ENCODE measurements at regions of chr5 and their contacts with region 1.

Region 1: GRCh38 chr5:151663617-151664293 is 23.0 kb downstream of the SPARC start:
- DNase-seq: peak in 2 of 4 donors; percentile 12 to 47
- ATAC-seq: no peak
- H3K4me3 ChIP-seq: no peak overlapping the region
- H3K27ac ChIP-seq: peak overlapping the region in 1 of 4 donors; percentile 15
- H3K4me1 ChIP-seq: peaks cover 15% of the 10 kb centered on the region
- H3K27me3 ChIP-seq: no peaks in the 10 kb centered on the region
- CTCF ChIP-seq: no peak
- POLR2A ChIP-seq: no peak

Region 2: DNA sequence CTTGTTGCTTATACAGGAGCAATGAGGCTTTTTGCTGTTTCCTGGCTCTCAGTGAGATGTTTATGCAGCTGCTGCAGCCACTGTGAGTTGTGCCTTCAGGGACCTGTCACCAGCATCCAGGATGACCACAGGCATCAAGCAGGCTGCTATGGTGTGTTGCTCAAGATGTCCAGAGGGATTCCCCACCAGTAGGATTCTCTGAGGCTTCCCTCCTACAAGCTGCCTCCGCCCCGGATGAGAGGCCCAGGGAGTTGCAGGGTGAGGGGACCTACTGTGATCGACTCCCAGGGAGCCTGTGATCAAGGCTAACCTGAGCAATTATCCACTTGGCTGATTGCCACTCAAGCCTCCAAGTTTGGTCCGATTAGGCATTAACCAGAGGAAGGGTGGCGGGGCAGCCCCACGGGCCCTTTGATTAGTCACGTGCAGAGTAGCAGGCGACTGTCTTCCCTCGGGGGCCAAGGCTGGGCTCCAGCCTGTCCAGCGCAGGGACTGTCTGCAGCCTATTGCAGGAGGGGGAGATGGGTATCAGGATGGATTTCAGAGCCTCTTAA is 70.8 kb before region 1 on chr5:
- intact Hi-C with region 1: no loop called
- DNase-seq: peak; percentile 12 to 44 (median 19)
- ATAC-seq: peak; percentile 35
- H3K4me3 ChIP-seq: no peak overlapping the region
- H3K27ac ChIP-seq: no peak overlapping the region
- H3K4me1 ChIP-seq: peaks cover 8% of the 10 kb centered on the region
- H3K27me3 ChIP-seq: no peaks in the 10 kb centered on the region
- CTCF ChIP-seq: no peak
- POLR2A ChIP-seq: no peak

Region 3: DNA sequence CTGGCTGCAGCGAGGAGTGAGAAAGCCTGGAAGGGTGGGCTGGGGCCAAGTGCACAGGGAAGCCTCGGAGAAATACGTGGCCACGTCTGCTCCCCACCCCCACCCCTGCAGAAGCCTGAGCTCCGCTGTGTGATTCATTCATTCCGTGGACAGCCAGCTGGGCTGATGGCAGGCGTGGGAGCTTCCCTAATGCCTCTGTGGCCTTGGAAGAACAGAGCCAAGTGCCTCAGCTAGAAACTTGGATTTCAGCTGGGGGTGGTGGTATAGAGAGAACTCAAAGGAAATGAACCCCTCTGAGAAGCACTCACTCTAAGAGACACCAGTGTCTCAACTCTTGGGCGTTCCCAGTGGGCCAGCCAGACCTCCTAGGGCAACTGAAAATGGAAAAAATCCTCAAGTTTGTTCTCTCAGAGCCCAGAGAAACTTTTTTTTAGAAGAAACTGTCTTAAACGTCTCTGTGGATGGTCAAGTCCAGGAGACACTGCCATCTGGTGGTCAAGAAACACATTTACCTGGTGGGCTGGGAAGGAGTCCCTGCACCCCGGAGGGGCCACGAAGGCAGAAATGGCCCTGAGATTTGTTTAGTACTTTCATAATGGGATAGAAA is 76.7 kb after region 1 on chr5:
- intact Hi-C with region 1: loop called (anchors 10 kb)
- DNase-seq: peak; percentile 40 to 54 (median 49)
- ATAC-seq: peak; percentile 75
- H3K4me3 ChIP-seq: no peak overlapping the region
- H3K27ac ChIP-seq: peak overlapping the region in 1 of 4 donors; percentile 33
- H3K4me1 ChIP-seq: peaks cover 8% of the 10 kb centered on the region
- H3K27me3 ChIP-seq: no peaks in the 10 kb centered on the region
- CTCF ChIP-seq: peak; percentile 63 to 85 (median 69)
- POLR2A ChIP-seq: no peak